ENCODE measurements at regions of chr3 and their contacts with region 1.

Region 1: DNA sequence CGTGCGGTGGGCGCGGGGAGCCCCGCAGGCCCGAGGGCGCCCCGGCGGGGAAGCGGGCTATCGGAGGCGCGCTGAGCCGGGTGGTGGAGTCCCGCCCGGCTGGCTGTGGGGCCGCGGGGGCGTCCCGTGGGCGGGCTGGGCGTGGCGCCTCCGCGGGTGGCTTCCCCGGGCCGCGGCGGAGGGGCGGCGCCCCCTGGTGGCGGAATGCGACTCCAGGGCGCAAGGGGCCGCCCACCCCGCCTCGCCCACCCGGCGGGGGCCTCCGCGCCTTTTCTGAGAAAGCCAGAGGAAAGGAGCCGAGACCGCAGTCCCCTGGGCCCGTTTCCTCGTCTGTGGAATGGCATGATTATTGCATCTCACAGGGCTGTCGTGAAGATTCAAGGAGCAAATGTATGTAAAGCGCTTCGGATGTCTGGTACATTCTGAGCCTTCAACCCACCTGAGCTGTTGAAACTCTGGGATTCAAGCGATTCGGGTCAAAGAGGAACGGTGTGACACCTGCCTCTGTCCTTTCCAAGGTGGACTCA is 31.9 kb upstream of the RAB6B start:
- DNase-seq: peak; percentile 69
- H3K4me3 ChIP-seq: peak overlapping the region; percentile 57
- H3K27ac ChIP-seq: no peak overlapping the region
- H3K4me1 ChIP-seq: peaks cover 11% of the 10 kb centered on the region
- H3K27me3 ChIP-seq: no peaks in the 10 kb centered on the region
- CTCF ChIP-seq: peak; percentile 58

Region 2: GRCh38 chr3:133661454-133662277 is 265.9 kb before region 1 on chr3 and contains the start of gene TOPBP1:
- CTCF ChIA-PET with region 1: no interaction called
- POLR2A ChIA-PET with region 1: no interaction called
- intact Hi-C with region 1: loop called (anchors 1 kb)
- DNase-seq: peak; percentile 87
- H3K4me3 ChIP-seq: peak within 1 kb of the TSS; percentile 87
- H3K27ac ChIP-seq: peak within 1 kb of the TSS; percentile 93
- H3K4me1 ChIP-seq: peaks cover 11% of the 10 kb centered on the region
- H3K27me3 ChIP-seq: no peaks in the 10 kb centered on the region
- CTCF ChIP-seq: no peak
- total RNA-seq, gene TOPBP1: 56.8 and 59.8 TPM in 2 replicates

Region 3: DNA sequence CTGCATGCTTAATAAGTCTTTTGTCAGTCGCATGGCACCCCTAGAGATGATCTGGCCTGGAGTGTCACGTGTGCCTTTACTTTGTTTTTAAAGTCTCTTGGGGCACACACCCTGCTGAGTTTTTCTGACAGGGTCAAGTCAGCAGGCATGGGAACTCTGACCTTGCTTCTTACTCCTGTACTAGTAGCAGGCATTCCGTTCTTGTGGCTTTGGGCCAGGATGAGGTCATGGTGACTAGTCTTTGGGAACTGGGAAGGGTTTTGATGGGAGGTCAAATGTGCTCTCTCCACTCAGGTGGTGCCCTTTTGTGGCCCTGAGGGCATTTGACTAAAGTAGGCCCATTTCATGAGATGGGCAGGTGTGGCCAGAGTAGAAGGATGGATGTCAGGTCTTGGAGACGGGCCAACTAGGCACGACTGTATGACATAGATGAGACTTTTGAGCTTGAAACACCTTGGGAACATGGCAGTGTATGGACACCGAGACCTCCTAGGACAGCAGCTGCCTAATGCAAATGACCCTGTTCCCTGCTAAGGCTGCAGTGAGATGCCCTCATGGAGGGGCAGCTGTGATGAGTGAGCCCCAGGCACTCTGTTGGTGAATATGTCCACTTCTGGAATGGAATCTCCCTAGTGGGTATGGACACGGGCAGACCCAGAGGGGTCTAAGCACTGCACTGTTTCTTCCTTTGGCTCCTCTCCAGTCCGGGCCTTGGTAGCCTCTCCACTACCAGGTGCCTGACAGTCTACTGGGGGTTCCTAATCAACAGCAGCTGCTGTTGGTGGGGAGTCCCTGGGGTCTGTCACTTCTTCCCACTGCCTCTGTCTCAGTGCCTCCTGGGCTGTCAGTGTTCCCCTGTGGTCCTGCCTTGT is 105.6 kb before region 1 on chr3:
- CTCF ChIA-PET with region 1: no interaction called
- POLR2A ChIA-PET with region 1: no interaction called
- intact Hi-C with region 1: loop called (anchors 1 kb)
- DNase-seq: no peak
- H3K4me3 ChIP-seq: no peak overlapping the region
- H3K27ac ChIP-seq: no peak overlapping the region
- H3K4me1 ChIP-seq: no peaks in the 10 kb centered on the region
- H3K27me3 ChIP-seq: no peaks in the 10 kb centered on the region
- CTCF ChIP-seq: no peak

Region 4: DNA sequence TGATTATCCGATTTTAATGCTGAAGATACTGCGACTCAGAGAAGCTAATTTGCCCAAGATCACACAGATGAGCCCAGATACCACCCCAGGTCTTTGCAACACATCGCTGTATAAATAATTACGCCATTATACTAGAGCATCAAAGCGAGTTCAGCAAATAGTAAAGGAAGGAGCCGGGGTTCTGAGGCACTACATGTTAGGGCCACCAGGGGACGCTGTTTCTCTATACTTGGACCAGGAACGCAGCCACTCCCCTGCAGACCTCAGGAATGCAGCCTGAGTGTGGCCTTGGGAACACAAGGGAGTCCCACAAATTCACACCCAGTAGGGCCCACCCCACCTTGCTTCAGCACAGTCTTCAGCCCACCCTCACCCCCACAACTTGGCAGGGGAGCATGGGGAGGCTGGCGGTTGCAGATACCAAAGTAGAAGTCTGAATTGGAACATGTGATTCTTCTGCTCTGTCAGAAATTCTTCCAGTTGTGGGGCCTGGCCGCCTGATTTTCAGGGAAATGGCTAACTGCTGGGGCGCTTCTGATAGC is 380.8 kb after region 1 on chr3:
- CTCF ChIA-PET with region 1: no interaction called
- POLR2A ChIA-PET with region 1: no interaction called
- intact Hi-C with region 1: loop called (anchors 5 kb)
- DNase-seq: peak; percentile 89
- H3K4me3 ChIP-seq: no peak overlapping the region
- H3K27ac ChIP-seq: peak overlapping the region; percentile 55
- H3K4me1 ChIP-seq: peaks cover 17% of the 10 kb centered on the region
- H3K27me3 ChIP-seq: no peaks in the 10 kb centered on the region
- CTCF ChIP-seq: peak; percentile 97

Region 5: DNA sequence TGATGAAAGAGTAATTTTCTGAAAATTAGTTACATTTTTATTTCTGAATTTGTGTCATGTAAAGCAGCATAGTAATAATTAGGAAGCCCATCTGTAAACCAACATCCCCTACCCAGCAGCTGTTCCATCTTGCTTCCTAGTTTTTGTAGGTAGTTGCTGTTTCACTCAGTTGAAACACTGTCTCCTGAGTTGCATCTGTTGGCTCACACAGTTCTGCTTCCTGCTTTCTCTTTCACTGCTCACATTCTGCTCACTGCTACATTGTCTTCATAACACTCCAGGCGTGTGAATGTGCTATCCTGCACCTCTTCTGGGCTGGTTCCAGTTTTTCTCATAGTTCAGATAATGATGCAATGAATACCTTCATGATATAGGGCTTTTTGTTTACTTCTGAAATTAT is 990.8 kb after region 1 on chr3:
- CTCF ChIA-PET with region 1: no interaction called
- POLR2A ChIA-PET with region 1: no interaction called
- intact Hi-C with region 1: no loop called
- DNase-seq: no peak
- H3K4me3 ChIP-seq: no peak overlapping the region
- H3K27ac ChIP-seq: no peak overlapping the region
- H3K4me1 ChIP-seq: no peaks in the 10 kb centered on the region
- H3K27me3 ChIP-seq: no peaks in the 10 kb centered on the region
- CTCF ChIP-seq: no peak

Measured in A673 (cell line).